Esophagus squamous epithelium (tissue), 5 donors: ENCODE measurements at regions of chr1 and their contacts with region 1.

Region 1: DNA sequence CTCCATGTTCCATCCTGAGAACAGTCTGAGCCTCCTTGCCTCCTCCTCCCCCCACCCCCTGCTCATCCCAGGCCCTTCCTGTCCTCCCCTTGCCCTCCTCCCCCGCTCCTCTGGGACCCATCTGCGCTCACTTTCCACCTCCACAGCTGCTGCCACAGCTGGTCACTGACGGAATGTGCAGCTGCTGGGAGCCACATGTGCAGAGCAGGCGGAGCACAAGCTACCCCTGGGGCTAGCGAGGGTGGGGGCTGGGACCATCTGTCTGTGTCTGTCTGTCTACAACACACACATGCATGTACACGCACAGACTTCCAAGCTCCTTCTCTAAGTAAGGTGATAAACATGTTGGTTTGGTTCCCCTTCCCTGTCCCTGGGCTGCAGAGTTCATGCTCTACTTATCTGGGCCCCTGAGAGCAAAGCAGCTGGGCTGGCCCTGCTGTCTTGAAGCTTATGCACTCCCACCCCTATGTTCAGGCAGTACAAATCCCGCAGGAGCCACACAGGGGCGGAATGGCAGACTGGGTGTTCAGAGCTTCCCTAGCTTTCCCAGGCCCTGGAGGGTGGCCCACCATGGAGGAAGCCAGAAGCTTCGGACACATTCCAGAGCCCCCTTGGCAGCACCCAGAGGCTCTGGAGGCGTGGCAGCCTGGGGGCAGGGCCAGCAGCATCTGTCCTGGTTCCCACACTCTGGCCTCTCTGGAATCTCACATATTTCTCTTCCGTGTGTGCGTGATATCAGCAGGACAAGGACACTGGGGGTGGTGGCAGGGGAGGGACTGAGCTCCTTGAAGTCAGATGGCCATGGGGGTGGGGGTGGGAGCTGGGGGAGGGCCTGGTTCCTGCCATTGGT is 7.0 kb upstream of the HEYL start:
- DNase-seq: no peak
- H3K4me3 ChIP-seq: no peak overlapping the region
- H3K27ac ChIP-seq: peak overlapping the region in 3 of 4 donors; percentile 60 to 67 (median 66)
- H3K4me1 ChIP-seq: peaks cover 0 to 21% (median 7%) of the 10 kb centered on the region in 3 donors
- H3K27me3 ChIP-seq: peaks cover 0 to 9% (median 0%) of the 10 kb centered on the region in 4 donors
- CTCF ChIP-seq: no peak
- POLR2A ChIP-seq: no peak

Region 2: GRCh38 chr1:39538588-39539465 is 107.6 kb before region 1 on chr1:
- intact Hi-C with region 1: no loop called
- DNase-seq: no peak
- H3K4me3 ChIP-seq: no peak overlapping the region
- H3K27ac ChIP-seq: no peak overlapping the region
- H3K4me1 ChIP-seq: peaks cover 0 to 7% (median 0%) of the 10 kb centered on the region in 3 donors
- H3K27me3 ChIP-seq: no peaks in the 10 kb centered on the region
- CTCF ChIP-seq: peak; percentile 71 to 87 (median 80)
- POLR2A ChIP-seq: no peak

Region 3: GRCh38 chr1:39609618-39610331 is 36.7 kb before region 1 on chr1:
- intact Hi-C with region 1: loop called (anchors 5 kb)
- DNase-seq: no peak
- H3K4me3 ChIP-seq: peak overlapping the region in 1 of 4 donors; percentile 43
- H3K27ac ChIP-seq: peak overlapping the region in 2 of 4 donors; percentile 6 to 28
- H3K4me1 ChIP-seq: peaks cover 0 to 22% (median 4%) of the 10 kb centered on the region in 3 donors
- H3K27me3 ChIP-seq: peaks cover 0 to 4% (median 0%) of the 10 kb centered on the region in 4 donors
- CTCF ChIP-seq: peak in 5 of 6 experiments; percentile 54 to 78 (median 63)
- POLR2A ChIP-seq: no peak